ENCODE measurements at regions of chr2 and their contacts with region 1.

Region 1: GRCh38 chr2:237662671-237663093 is 35.3 kb downstream of the LRRFIP1 start:
- DNase-seq: peak in 9 of 14 experiments; percentile 8 to 79 (median 44)
- ATAC-seq: peak; percentile 82
- H3K4me3 ChIP-seq: no peak overlapping the region
- H3K4me3 Mint-ChIP-seq: no peak overlapping the region
- H3K27ac ChIP-seq: no peak overlapping the region
- H3K27ac Mint-ChIP-seq: no peak overlapping the region
- H3K4me1 ChIP-seq: peaks cover 12% of the 10 kb centered on the region
- H3K4me1 Mint-ChIP-seq: peaks cover 8% of the 10 kb centered on the region
- H3K27me3 ChIP-seq: no peaks in the 10 kb centered on the region
- H3K27me3 Mint-ChIP-seq: peaks cover 12% of the 10 kb centered on the region
- CTCF ChIP-seq: no peak

Region 2: GRCh38 chr2:237627441-237628246 is 35.0 kb before region 1 on chr2 and contains the start of gene LRRFIP1:
- CTCF ChIA-PET with region 1: no interaction called
- POLR2A ChIA-PET with region 1: no interaction called
- intact Hi-C with region 1: loop called in 1 of 2 experiments (anchors 5 kb)
- DNase-seq: peak in 7 of 14 experiments; percentile 8 to 45 (median 30)
- ATAC-seq: peak; percentile 68
- H3K4me3 ChIP-seq: peak within 1 kb of the TSS; percentile 46
- H3K4me3 Mint-ChIP-seq: peak within 1 kb of the TSS; percentile 93
- H3K27ac ChIP-seq: no peak within 1 kb of the TSS
- H3K27ac Mint-ChIP-seq: peak within 1 kb of the TSS; percentile 78
- H3K4me1 ChIP-seq: peaks cover 20% of the 10 kb centered on the region
- H3K4me1 Mint-ChIP-seq: peaks cover 39% of the 10 kb centered on the region
- H3K27me3 ChIP-seq: peaks cover 7 to 9% of the 10 kb centered on the region in 2 experiments
- H3K27me3 Mint-ChIP-seq: peaks cover 20% of the 10 kb centered on the region
- CTCF ChIP-seq: no peak
- total RNA-seq, gene LRRFIP1: 157 to 161 TPM

Region 3: GRCh38 chr2:237766340-237766739 is 103.7 kb after region 1 on chr2:
- CTCF ChIA-PET with region 1: no interaction called
- POLR2A ChIA-PET with region 1: no interaction called
- intact Hi-C with region 1: no loop called
- DNase-seq: no peak
- ATAC-seq: no peak
- H3K4me3 ChIP-seq: no peak overlapping the region
- H3K4me3 Mint-ChIP-seq: no peak overlapping the region
- H3K27ac ChIP-seq: no peak overlapping the region
- H3K27ac Mint-ChIP-seq: peak overlapping the region; percentile 49
- H3K4me1 ChIP-seq: no peaks in the 10 kb centered on the region
- H3K4me1 Mint-ChIP-seq: peaks cover 13% of the 10 kb centered on the region
- H3K27me3 ChIP-seq: no peaks in the 10 kb centered on the region
- H3K27me3 Mint-ChIP-seq: no peaks in the 10 kb centered on the region
- CTCF ChIP-seq: no peak